ENCODE measurements at regions of chr7 and their contacts with region 1.

Region 1: DNA sequence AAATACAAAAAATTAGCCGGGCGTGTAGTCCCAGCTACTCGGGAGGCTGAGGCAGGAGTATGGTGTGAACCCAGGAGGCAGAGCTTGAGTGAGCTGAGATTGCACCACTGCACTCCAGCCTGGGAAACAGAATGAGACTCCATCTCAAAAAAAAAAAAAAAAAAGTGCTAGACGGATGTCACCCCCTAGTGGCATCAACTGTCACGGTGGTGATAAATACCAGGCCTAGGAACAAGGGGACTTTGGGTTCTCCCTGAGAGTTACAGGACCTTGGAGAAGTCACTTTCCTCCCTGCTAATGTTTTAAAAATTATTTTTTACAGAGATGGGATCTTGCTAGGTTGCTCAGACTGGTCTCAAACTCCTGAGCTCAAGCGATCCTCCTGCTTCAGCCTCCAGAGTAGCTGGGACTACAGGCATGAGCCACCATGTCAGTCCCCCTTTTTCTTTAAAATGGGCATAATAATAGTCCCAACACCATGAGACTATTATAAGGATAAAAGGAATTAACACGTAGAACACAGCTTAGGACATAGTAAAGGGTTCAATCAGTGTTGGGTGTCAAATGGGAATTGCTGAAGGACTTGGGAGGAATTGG is 2.6 kb upstream of the TMEM130 start:
- DNase-seq: peak; percentile 56
- ATAC-seq: peak; percentile 29
- H3K4me3 Mint-ChIP-seq: no peak overlapping the region
- H3K27ac Mint-ChIP-seq: no peak overlapping the region
- H3K4me1 Mint-ChIP-seq: peaks cover 4% of the 10 kb centered on the region
- H3K27me3 Mint-ChIP-seq: peaks cover 24% of the 10 kb centered on the region

Region 2: DNA sequence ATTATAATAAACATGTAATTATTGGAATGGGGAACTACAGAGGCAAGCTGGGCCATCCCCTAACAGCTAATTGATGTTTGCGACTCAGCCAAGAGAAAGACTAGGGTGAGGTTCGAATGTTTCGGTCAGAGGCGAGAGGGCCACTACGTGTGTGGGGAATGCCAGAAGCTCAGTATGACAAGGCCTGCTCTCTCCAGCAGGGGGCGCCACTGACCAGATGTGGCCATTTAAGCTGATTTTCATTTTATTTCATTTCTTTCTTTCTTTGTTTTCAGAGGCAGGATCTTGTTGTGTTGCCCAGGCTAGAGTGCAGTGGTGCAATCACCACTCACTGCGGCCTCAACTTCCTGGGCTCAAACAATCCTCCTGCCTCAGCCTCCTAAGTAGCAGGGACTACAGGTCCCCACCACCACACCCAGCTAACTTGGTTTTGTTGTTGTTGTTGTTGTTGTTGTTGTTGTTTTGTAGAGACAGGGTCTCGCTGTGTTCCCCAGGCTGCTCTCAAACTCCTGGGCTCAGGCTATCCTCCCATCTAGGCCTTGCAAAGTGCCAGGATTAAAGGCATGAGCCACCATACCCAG is 40.7 kb before region 1 on chr7:
- CTCF ChIA-PET with region 1: interaction called, 10 read pairs
- POLR2A ChIA-PET with region 1: no interaction called
- DNase-seq: peak; percentile 48
- ATAC-seq: no peak
- H3K4me3 Mint-ChIP-seq: no peak overlapping the region
- H3K27ac Mint-ChIP-seq: no peak overlapping the region
- H3K4me1 Mint-ChIP-seq: no peaks in the 10 kb centered on the region
- H3K27me3 Mint-ChIP-seq: no peaks in the 10 kb centered on the region

Measured in activated CD8-positive, alpha-beta T cell treated with anti-CD3 and anti-CD28 coated beads, Interleukin-2, amount 10 ng/mL, durations not matched to agents 7 days and 5 days (primary cell).